CD8-positive, alpha-beta T cell (primary cell): ENCODE measurements at regions of chr1 and their contacts with region 1.

Region 1: DNA sequence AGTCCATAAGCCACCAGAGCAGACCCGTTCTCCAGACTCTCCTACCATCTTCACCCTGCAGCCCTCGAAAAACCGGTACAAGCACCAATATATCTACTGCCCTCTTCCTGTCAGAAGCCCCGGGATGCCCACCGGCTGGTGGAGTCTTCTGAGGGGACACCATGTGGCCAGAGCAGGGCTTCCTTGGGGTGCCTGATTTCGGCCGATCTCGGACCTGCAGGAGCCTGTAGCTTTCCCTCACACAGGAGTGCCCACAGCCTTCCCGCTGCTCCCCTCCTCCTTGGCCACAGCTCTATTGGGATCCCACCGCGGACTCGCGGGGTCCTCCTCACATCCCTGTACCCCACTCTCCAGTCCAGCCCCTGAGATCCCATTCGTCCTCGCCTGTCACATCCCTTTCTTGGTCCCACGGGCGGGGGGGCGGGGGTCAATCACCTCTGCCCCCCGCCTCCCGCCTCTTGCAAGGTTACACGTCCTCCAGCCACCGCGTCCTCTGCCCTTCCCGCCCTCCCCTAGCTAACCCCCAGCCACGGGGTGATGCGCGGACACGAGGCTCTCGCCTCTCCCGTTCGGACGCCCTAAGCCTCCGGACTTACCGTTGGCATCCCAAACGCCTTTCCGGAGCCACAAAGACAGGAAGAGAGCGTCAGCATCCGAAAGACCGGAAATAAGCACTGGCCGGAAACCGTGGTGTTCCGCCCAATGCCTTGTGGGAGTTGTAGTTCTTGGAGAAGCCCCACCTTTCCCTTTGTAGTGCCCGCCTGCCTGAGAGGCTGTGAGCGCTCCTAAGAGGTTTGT is at the start of gene SSR2:
- DNase-seq: peak; percentile 67 to 94 (median 84)
- ATAC-seq: peak; percentile 99
- H3K4me3 ChIP-seq: peak within 1 kb of the TSS; percentile 77 to 83
- H3K4me3 Mint-ChIP-seq: peak within 1 kb of the TSS; percentile 98
- H3K27ac ChIP-seq: peak within 1 kb of the TSS; percentile 61 to 64
- H3K27ac Mint-ChIP-seq: peak within 1 kb of the TSS; percentile 96
- H3K4me1 ChIP-seq: peaks cover 15% of the 10 kb centered on the region
- H3K4me1 Mint-ChIP-seq: peaks cover 30% of the 10 kb centered on the region
- H3K27me3 ChIP-seq: peaks cover 0 to 5% of the 10 kb centered on the region in 2 experiments
- H3K27me3 Mint-ChIP-seq: peaks cover 2% of the 10 kb centered on the region
- CTCF ChIP-seq: no peak
- total RNA-seq, gene SSR2: 208 to 212 TPM

Region 2: DNA sequence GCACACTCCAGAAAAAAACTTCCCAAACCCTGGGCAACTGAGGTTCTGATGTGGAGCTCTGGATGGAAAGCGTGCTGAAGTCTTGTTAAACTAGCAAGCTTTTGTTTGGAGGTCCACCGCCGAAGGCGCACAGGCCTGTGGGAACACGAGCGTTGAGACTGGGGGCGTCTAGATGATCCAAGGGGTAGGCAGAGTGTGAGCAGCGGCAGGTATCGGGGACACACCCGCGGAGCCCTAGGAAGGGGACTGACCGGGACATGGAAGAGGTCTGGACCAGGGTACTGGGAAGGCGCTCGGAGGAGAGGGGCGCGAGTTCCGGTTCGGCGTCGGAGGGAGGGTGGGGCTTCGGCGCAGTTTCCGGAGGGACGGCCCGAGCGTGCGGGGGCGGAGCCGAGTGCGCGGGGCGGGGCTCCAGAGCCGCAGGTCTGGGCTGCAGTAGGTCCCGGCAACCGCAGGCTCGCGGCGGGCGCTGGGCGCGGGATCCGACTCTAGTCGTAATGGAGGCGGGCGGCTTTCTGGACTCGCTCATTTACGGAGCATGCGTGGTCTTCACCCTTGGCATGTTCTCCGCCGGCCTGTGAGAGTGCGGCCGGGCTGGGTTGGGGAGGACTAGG is 885.0 kb before region 1 on chr1 and contains the start of gene SLC50A1:
- CTCF ChIA-PET with region 1: no interaction called
- POLR2A ChIA-PET with region 1: no interaction called
- intact Hi-C with region 1: loop called in 1 of 2 experiments (anchors 5 kb)
- DNase-seq: peak; percentile 82 to 96 (median 92)
- ATAC-seq: peak; percentile 84
- H3K4me3 ChIP-seq: peak within 1 kb of the TSS; percentile 93 to 95
- H3K4me3 Mint-ChIP-seq: peak within 1 kb of the TSS; percentile 98
- H3K27ac ChIP-seq: peak within 1 kb of the TSS; percentile 78 to 99
- H3K27ac Mint-ChIP-seq: peak within 1 kb of the TSS; percentile 99
- H3K4me1 ChIP-seq: peaks cover 29% of the 10 kb centered on the region
- H3K4me1 Mint-ChIP-seq: peaks cover 49% of the 10 kb centered on the region
- H3K27me3 ChIP-seq: no peaks in the 10 kb centered on the region
- H3K27me3 Mint-ChIP-seq: no peaks in the 10 kb centered on the region
- CTCF ChIP-seq: no peak
- total RNA-seq, gene SLC50A1: 12.9 to 14.2 TPM

Region 3: DNA sequence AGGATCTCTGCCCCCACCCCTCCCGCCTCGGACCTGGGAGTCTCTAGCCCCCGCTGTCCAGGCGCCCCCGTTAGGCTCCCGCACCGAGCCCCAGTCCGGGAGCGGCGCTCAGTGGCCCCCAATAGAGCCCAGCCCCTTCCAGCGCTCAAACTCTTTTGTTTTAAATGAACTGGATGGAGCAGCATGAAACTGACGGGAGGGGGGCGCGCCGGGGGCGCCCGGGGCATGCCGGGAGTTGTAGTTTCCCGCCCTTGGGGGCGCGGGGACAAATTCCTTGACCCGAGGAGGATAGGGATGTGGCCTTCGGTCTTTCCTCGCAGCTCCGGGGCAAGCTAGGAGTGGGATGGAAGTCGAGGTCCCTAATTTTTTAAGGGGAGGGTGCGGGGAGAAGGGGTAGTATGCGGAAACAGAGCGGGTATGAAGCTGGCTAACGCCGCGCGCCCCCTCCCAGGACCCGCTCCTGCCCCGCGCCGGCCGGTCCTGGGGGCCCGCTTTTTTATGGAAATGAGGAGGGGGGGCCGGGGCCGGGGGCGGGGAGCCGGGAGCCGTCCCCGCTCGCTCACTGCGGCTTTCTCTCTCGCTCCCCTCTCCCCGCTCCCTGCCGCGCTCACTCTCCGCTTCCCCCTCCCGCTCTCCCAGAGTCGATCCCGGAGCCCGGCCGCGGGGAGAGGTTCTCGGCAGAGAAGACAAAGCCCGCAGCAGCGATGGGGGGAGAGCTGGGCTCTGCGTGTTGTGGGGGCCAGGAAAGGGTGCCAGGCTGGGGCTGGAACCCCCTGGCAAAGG is 62.0 kb after region 1 on chr1 and contains the start of gene MEX3A:
- CTCF ChIA-PET with region 1: no interaction called
- POLR2A ChIA-PET with region 1: no interaction called
- intact Hi-C with region 1: loop called in 1 of 2 experiments (anchors 1 kb)
- DNase-seq: peak in 8 of 9 experiments; percentile 39 to 73 (median 64)
- ATAC-seq: peak; percentile 90
- H3K4me3 ChIP-seq: peak within 1 kb of the TSS; percentile 65 to 88
- H3K4me3 Mint-ChIP-seq: peak within 1 kb of the TSS; percentile 87
- H3K27ac ChIP-seq: no peak within 1 kb of the TSS
- H3K27ac Mint-ChIP-seq: no peak within 1 kb of the TSS
- H3K4me1 ChIP-seq: peaks cover 13% of the 10 kb centered on the region
- H3K4me1 Mint-ChIP-seq: peaks cover 7% of the 10 kb centered on the region
- H3K27me3 ChIP-seq: peaks cover 3 to 25% of the 10 kb centered on the region in 2 experiments
- H3K27me3 Mint-ChIP-seq: peaks cover 29% of the 10 kb centered on the region
- CTCF ChIP-seq: no peak
- total RNA-seq, gene MEX3A: 0.14 to 0.22 TPM